A673 (cell line): ENCODE measurements at regions of chr14 and their contacts with region 1.

Region 1: DNA sequence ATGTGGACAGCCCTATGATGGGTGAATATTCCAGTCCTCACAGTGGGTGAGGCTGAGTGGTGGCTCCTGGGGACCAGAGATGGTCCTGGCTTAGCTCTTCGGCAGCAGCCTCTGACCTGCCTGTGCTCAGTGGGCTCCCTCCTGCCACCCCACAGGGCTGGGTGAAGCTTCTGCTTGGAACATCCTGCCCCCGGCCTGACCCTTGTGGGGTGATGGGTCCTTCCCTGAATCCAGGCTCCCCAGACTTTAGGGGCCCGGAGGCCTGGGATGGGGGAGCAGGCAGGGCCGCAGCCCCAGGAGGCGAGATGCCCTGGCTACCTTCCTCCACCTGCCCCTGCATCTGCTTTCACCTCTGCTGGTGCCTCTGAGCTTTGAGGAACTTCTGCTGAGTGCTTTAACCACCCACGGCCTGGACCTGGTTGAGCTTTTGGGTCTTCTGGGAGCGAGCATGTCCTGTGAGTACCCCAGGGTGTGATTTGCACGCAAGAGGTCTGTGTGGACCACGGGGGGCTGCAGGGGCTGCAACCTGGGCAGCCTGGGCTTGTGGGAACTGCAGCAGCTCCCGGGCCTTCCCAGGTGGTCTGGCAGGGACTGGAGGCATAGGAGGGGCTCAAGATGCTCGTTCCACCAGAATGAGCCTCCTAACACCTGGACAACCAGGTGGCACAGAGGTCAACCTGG is 159.5 kb downstream of the KIF26A start:
- DNase-seq: no peak
- H3K4me3 ChIP-seq: no peak overlapping the region
- H3K27ac ChIP-seq: no peak overlapping the region
- H3K4me1 ChIP-seq: peaks cover 51% of the 10 kb centered on the region
- H3K27me3 ChIP-seq: no peaks in the 10 kb centered on the region
- CTCF ChIP-seq: no peak

Region 2: GRCh38 chr14:104280902-104281767 is 16.7 kb before region 1 on chr14:
- CTCF ChIA-PET with region 1: no interaction called
- POLR2A ChIA-PET with region 1: interaction called, 16 read pairs
- intact Hi-C with region 1: no loop called
- DNase-seq: no peak
- H3K4me3 ChIP-seq: no peak overlapping the region
- H3K27ac ChIP-seq: no peak overlapping the region
- H3K4me1 ChIP-seq: peaks cover 25% of the 10 kb centered on the region
- H3K27me3 ChIP-seq: no peaks in the 10 kb centered on the region
- CTCF ChIP-seq: no peak